Activated T-helper 1 cell treated with anti-CD3 and anti-CD28 coated beads, Interleukin-12 subunit alpha, Interleukin-12 subunit beta, Interleukin-2, Interleukin-4 antibody, amounts not matched to agents 30 ng/mL and 10 ng/mL and 1 ng/mL, durations not matched to agents 14 hours and 24 hours and 36 hours (primary cell): ENCODE measurements at regions of chr1 and their contacts with region 1.

Region 1: DNA sequence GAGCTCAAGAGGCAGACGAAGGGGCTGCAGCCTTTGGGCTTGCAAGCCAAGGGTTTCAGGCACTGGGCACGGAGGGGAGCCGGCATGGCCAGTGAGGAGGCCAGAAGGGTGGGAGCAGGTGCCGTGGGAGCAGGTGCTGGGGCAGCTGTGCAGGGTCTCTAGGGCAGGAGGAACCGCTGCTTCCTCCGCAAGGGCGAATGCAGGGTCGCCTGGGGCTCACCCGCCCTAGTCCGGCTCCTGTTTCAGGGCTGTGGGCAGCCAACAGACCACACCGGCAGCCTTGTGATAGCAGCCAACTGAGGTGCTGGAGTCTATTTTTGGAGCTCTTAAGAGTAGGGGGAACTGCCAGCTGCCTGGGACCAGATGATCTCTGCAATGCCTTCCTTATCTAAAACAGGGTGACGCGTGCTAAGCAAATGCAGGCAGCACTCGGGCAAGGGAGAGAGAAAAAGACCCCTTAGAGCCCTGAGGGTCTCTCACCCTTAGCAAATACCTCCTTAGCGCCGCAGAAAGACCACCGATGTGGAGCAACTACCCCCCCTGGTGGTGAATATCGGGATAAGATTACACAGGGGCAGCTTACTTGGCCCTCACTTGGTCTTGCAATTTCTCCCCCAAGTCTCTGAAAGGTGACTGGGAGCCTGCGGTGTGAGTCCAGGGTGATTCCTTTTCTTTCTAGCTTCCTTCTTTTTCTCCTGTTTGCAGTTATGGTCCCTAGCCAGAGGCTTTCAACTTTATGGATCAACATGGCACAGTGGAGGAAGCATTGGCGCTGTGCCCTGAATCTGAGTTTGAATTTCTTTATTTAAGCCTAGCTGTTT is 20.7 kb upstream of the MAPKAPK2 start:
- DNase-seq: peak; percentile 52
- H3K4me3 Mint-ChIP-seq: peak overlapping the region; percentile 71
- H3K27ac Mint-ChIP-seq: peak overlapping the region; percentile 11
- H3K4me1 Mint-ChIP-seq: peaks cover 39% of the 10 kb centered on the region
- H3K27me3 Mint-ChIP-seq: no peaks in the 10 kb centered on the region

Region 2: GRCh38 chr1:206489980-206490770 is 173.9 kb before region 1 on chr1:
- intact Hi-C with region 1: loop called (anchors 1 kb)
- DNase-seq: peak; percentile 43
- H3K4me3 Mint-ChIP-seq: no peak overlapping the region
- H3K27ac Mint-ChIP-seq: peak overlapping the region; percentile 70
- H3K4me1 Mint-ChIP-seq: peaks cover 13% of the 10 kb centered on the region
- H3K27me3 Mint-ChIP-seq: no peaks in the 10 kb centered on the region

Region 3: DNA sequence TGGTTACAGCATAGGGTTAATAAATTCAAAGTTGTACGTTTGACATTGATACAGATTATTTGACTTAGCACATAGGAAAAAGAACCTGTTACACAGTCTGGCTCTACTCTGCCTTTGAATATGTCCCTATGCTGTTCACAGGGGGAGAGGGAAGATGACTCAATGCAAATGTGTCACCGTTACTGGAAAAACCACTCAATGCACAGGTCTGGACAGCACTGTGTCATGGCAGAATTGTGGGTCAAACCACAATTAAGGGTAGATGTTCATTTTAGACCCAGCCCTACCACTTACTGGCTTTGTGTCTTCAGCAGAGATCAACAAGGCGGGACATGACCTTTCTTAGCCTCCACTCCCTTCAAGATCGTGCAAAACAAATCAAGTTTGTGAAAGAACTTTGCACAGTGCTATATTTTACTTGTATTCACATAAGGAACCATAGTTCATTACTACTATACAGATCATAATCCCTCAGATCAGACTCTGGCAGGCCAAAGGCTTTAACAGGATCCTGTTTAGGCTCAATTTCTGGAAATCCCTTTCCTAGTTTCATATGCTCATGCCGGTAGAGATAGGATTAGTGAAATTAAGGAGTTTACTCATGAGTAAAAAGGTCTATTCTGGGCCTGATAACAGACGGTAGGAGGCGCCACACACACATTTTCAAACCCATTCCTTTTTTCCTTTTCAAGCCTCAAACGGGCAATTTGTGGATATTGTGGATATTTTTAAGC is 73.8 kb before region 1 on chr1:
- intact Hi-C with region 1: loop called (anchors 5 kb)
- DNase-seq: peak; percentile 70
- H3K4me3 Mint-ChIP-seq: peak overlapping the region; percentile 65
- H3K27ac Mint-ChIP-seq: peak overlapping the region; percentile 95
- H3K4me1 Mint-ChIP-seq: peaks cover 87% of the 10 kb centered on the region
- H3K27me3 Mint-ChIP-seq: no peaks in the 10 kb centered on the region

Region 4: GRCh38 chr1:206684478-206685333 is 20.7 kb after region 1 on chr1 and contains the start of gene MAPKAPK2:
- intact Hi-C with region 1: loop called (anchors 2 kb)
- DNase-seq: peak; percentile 69
- H3K4me3 Mint-ChIP-seq: peak within 1 kb of the TSS; percentile 98
- H3K27ac Mint-ChIP-seq: peak within 1 kb of the TSS; percentile 96
- H3K4me1 Mint-ChIP-seq: peaks cover 72% of the 10 kb centered on the region
- H3K27me3 Mint-ChIP-seq: peaks cover 7% of the 10 kb centered on the region
- total RNA-seq, gene MAPKAPK2: 117 and 120 TPM in 2 replicates

Region 5: DNA sequence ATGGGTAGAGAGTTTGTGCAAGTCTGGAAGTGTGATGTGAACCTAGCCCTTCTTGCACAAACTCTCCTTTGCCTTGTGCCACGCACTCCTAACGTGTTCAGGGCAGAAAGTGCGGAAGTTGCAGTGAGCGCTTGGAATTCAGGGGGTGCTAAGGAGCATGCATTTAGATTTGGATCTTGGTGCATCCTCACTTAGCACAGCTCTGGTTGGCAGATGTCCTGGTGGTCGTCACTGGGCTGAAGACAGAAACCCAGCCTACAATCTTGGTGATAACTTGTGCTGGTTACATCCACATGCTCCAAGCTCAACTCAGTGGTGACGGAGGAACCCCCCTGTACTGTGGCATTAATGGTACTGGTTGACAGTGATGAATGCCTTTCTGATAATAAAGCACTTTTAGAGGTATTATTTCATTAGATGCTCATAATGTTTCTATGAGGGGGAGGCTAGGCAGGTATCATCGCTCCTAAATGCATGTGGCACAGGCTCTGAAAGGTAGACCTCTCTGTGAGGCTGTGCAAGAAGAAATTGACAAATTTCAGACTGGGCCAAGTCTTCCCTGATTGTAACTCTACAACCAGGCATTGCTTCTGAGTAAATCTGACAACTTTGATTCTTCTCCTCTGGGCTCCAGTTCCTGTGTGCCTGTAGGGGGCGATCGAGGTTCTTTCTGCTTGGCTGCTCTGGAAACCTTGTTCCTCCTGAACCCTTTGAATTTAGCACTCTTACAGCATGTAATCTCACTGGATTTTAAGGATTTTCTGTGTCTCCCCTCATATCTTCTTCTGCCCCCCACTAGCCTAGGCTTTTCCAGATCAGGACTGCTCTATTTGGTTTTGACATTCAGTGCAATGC is 61.3 kb after region 1 on chr1:
- intact Hi-C with region 1: loop called (anchors 2 kb)
- DNase-seq: peak; percentile 37
- H3K4me3 Mint-ChIP-seq: no peak overlapping the region
- H3K27ac Mint-ChIP-seq: peak overlapping the region; percentile 7
- H3K4me1 Mint-ChIP-seq: peaks cover 63% of the 10 kb centered on the region
- H3K27me3 Mint-ChIP-seq: no peaks in the 10 kb centered on the region

Region 6: GRCh38 chr1:206982216-206982615 is 318.2 kb after region 1 on chr1:
- intact Hi-C with region 1: loop called (anchors 5 kb)
- DNase-seq: peak; percentile 36
- H3K4me3 Mint-ChIP-seq: no peak overlapping the region
- H3K27ac Mint-ChIP-seq: no peak overlapping the region
- H3K4me1 Mint-ChIP-seq: no peaks in the 10 kb centered on the region
- H3K27me3 Mint-ChIP-seq: peaks cover 34% of the 10 kb centered on the region